ENCODE measurements at regions of chr20 and their contacts with region 1.

Region 1: DNA sequence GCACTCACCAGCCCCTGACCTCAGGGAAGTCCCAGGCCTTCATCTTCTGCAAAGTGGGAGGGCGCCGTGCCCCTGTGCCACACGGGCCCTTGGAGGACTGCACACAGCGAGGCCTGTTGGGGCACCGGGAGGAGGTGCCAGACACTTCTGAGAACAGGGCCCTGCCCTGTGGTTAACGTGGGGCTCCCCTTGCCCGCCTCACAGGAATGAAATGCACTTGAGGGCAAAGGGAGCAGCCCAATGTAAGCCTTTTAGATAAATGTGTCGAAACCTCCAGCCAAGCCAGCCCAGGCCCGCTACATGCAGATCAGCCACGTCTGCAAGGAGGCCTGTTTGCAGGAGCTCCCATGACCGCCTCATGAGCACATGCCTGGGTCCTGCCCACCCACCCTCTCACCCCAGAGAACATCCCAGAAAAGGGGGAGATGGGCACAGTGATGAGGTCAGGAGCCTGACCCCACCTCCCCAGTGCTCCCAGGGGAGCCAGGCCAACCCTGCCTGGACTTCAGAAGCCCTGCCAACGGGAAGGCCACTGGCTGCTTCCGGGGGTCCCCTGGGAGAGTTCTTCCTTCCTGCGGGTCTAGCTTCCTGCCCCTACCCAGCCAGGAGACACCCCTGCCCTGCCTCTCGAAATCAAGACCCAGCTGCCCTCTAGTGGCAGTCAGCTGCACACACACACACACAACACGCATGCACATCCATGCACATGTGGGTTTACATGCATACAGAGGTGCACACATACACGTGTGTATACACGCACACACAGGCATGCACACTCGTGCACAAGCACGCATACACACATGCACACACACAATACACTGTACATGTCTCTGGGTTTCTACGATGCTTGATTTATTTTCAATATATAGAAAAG is 178.7 kb downstream of the TAF4 start:
- DNase-seq: peak; percentile 53
- ATAC-seq: peak; percentile 76
- H3K4me3 ChIP-seq: no peak overlapping the region
- H3K27ac ChIP-seq: no peak overlapping the region
- H3K4me1 ChIP-seq: no peaks in the 10 kb centered on the region
- H3K27me3 ChIP-seq: peaks cover 20 to 50% of the 10 kb centered on the region in 2 experiments
- CTCF ChIP-seq: peak; percentile 97
- EP300 ChIP-seq: no peak
- POLR2A ChIP-seq: no peak
- RAD21 ChIP-seq: peak; percentile 79

Region 2: GRCh38 chr20:61724376-61724775 is 162.6 kb before region 1 on chr20:
- CTCF ChIA-PET with region 1: interaction called, 7 read pairs
- POLR2A ChIA-PET with region 1: no interaction called
- in situ Hi-C with region 1: no loop called
- intact Hi-C with region 1: loop called (anchors 5 kb)
- DNase-seq: peak; percentile 22
- ATAC-seq: peak; percentile 66
- H3K4me3 ChIP-seq: no peak overlapping the region
- H3K27ac ChIP-seq: no peak overlapping the region
- H3K4me1 ChIP-seq: peaks cover 12% of the 10 kb centered on the region; the same call in 1 of the 2 replicates
- H3K27me3 ChIP-seq: peaks cover 0 to 43% of the 10 kb centered on the region in 2 experiments; a peak in 4 of 5 replicates
- CTCF ChIP-seq: peak; percentile 66
- EP300 ChIP-seq: no peak
- POLR2A ChIP-seq: no peak
- RAD21 ChIP-seq: no peak

Region 3: GRCh38 chr20:61903575-61904340 is 16.8 kb after region 1 on chr20:
- CTCF ChIA-PET with region 1: no interaction called
- POLR2A ChIA-PET with region 1: no interaction called
- in situ Hi-C with region 1: no loop called
- intact Hi-C with region 1: no loop called
- DNase-seq: no peak
- ATAC-seq: no peak
- H3K4me3 ChIP-seq: no peak overlapping the region
- H3K27ac ChIP-seq: no peak overlapping the region
- H3K4me1 ChIP-seq: peaks cover 34% of the 10 kb centered on the region
- H3K27me3 ChIP-seq: peaks cover 32 to 81% of the 10 kb centered on the region in 2 experiments
- CTCF ChIP-seq: no peak
- EP300 ChIP-seq: no peak
- POLR2A ChIP-seq: no peak
- RAD21 ChIP-seq: no peak

Region 4: GRCh38 chr20:62088237-62089127 is 201.5 kb after region 1 on chr20:
- CTCF ChIA-PET with region 1: no interaction called
- POLR2A ChIA-PET with region 1: no interaction called
- in situ Hi-C with region 1: no loop called
- intact Hi-C with region 1: no loop called
- DNase-seq: peak; percentile 80
- ATAC-seq: peak; percentile 40
- H3K4me3 ChIP-seq: no peak overlapping the region
- H3K27ac ChIP-seq: no peak overlapping the region
- H3K4me1 ChIP-seq: peaks cover 10% of the 10 kb centered on the region
- H3K27me3 ChIP-seq: peaks cover 13 to 46% of the 10 kb centered on the region in 2 experiments; a peak in 4 of 5 replicates
- CTCF ChIP-seq: no peak
- EP300 ChIP-seq: peak in 1 of 2 experiments; percentile 56; a peak in 1 of 4 replicates
- POLR2A ChIP-seq: no peak
- RAD21 ChIP-seq: no peak